ENCODE measurements at regions of chr15 and their contacts with region 1.

Region 1: GRCh38 chr15:94097552-94097951 is 133.8 kb upstream of the MCTP2 start:
- DNase-seq: no peak
- ATAC-seq: no peak
- H3K4me3 ChIP-seq: no peak overlapping the region
- H3K27ac ChIP-seq: no peak overlapping the region
- H3K4me1 ChIP-seq: no peaks in the 10 kb centered on the region
- H3K27me3 ChIP-seq: no peaks in the 10 kb centered on the region
- CTCF ChIP-seq: no peak

Region 2: DNA sequence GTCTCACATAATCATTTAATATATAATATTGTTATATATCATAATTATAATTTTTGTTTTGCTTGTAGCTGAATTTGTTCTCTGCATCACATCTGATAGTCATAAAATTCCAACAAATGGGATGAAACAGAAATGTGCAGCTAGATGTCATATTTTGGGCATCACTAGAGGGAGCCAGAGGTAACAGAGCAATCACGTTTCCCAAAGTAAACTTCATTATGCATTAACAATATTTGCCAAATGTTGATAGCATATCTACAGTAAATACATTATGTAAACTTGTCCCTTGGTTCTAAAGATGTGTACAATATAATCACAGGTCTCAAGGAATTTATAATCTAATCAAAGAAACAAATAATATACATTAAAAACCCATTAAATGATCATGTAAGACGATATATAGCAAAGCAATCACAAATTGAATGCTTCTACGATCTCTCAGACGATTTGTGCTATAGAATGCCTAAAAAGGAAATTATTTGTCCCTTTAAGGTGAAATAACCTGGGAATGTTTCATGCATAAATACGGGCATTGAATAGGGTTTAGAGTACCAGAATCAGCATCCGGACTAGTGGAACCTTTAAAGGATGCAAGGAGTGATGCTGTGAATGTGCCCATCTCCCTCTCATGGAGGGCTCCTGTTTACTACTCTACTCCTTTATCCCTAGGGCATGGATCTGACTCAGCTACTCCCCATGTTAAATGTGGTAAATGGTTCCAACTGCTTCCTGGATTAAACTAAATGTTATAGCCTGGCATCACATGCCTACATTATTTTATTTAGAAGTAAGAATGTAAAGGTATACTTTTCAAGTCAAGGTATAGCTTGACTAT is 100.3 kb before region 1 on chr15:
- intact Hi-C with region 1: loop called in 1 of 2 experiments (anchors 10 kb)
- DNase-seq: peak in 1 of 4 donors; percentile 24
- ATAC-seq: peak; percentile 64
- H3K4me3 ChIP-seq: no peak overlapping the region
- H3K27ac ChIP-seq: no peak overlapping the region
- H3K4me1 ChIP-seq: no peaks in the 10 kb centered on the region
- H3K27me3 ChIP-seq: no peaks in the 10 kb centered on the region
- CTCF ChIP-seq: peak; percentile 40 to 63

Region 3: GRCh38 chr15:94154245-94154644 is 56.7 kb after region 1 on chr15:
- intact Hi-C with region 1: no loop called
- DNase-seq: no peak
- ATAC-seq: no peak
- H3K4me3 ChIP-seq: no peak overlapping the region
- H3K27ac ChIP-seq: no peak overlapping the region
- H3K4me1 ChIP-seq: no peaks in the 10 kb centered on the region
- H3K27me3 ChIP-seq: no peaks in the 10 kb centered on the region
- CTCF ChIP-seq: no peak